Activated CD4-positive, alpha-beta memory T cell treated with anti-CD3 and anti-CD28 coated beads for 36 hours (primary cell): ENCODE measurements at regions of chr19 and their contacts with region 1.

Region 1: GRCh38 chr19:48933382-48933932 is at the start of gene DHDH:
- DNase-seq: peak; percentile 89
- H3K4me3 Mint-ChIP-seq: peak within 1 kb of the TSS; percentile 78
- H3K27ac Mint-ChIP-seq: peak within 1 kb of the TSS; percentile 69
- H3K4me1 Mint-ChIP-seq: peaks cover 10% of the 10 kb centered on the region
- H3K27me3 Mint-ChIP-seq: no peaks in the 10 kb centered on the region
- total RNA-seq, gene DHDH: 2.0 to 2.8 TPM

Region 2: DNA sequence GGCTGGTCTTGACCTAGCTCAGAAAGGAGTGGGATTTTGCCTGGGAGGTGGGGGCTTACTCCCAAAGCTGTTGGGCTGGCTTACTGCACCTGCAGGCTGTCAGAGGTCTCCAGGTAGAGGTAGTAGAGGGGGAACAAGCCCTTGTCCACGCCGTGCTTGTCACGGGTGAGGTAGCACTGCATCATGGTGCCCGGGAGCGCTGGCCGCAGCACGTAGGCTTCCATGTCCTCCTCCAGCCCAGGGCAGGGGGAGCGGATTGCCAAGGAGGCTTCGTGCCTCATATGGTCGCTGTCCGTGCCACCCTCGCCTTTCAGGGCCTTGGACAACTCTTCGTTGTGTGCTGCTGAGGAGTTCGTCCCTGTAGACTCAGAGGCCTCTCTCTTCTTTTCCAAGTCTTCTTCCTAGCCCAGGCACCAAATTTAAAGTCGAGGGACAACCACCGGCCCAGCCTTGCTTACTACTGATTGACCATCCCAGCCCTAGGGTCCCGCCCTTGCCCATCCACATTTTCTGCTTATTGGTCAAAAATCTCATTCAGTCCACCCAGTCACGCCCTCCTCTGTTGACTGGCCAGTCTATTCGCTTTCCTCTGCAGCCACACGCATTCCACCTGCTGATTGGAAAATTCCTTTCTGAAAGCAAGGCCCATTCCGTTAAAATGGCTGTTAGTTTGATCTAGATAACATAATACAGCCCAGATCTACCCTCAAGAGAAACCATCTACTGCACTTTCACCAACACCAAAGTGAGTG is 45.4 kb before region 1 on chr19:
- CTCF ChIA-PET with region 1: no interaction called
- POLR2A ChIA-PET with region 1: no interaction called
- intact Hi-C with region 1: no loop called
- DNase-seq: no peak
- H3K4me3 Mint-ChIP-seq: no peak overlapping the region
- H3K27ac Mint-ChIP-seq: no peak overlapping the region
- H3K4me1 Mint-ChIP-seq: no peaks in the 10 kb centered on the region
- H3K27me3 Mint-ChIP-seq: peaks cover 3% of the 10 kb centered on the region

Region 3: DNA sequence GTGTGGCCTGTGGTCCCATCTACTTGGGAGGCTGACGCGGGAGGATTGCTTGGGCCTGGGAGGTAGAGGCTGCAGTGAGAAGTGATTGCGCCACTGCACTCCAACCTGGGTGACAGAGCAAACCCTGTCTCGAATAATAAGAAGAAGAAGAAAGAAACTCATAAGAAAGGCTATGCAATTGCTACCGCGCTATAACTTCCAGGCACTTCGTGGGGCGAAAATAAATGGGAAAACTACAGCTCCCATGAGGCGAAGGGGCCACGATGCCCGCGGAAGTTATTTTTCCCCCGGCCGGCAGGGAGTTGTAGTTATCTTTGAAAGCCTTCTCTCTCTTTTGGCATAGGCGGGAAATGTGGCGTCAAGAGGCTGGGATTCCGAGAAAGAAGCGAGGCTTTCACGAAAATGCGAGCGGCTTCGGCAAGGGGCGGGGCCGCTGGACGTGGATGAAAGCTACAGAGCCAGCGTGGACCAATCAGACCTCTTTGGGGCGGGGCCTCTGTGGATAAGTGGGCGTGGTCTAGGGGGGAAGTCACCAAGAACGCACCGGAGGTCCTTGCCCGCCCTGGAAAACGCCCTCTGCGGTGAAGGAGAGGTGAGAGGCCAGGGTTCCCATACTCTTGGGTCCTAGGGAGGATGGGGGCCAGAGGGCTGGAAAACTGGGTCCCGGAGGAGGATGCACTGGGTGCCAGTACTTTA is 33.5 kb before region 1 on chr19 and contains the start of gene NUCB1:
- CTCF ChIA-PET with region 1: no interaction called
- POLR2A ChIA-PET with region 1: interaction called, 3 read pairs
- intact Hi-C with region 1: loop called (anchors 1 kb)
- DNase-seq: peak; percentile 100
- H3K4me3 Mint-ChIP-seq: peak within 1 kb of the TSS; percentile 96
- H3K27ac Mint-ChIP-seq: peak within 1 kb of the TSS; percentile 97
- H3K4me1 Mint-ChIP-seq: peaks cover 28% of the 10 kb centered on the region
- H3K27me3 Mint-ChIP-seq: peaks cover 7% of the 10 kb centered on the region
- total RNA-seq, gene NUCB1: 154 to 159 TPM